ENCODE measurements at regions of chr18 and their contacts with region 1.

Region 1: DNA sequence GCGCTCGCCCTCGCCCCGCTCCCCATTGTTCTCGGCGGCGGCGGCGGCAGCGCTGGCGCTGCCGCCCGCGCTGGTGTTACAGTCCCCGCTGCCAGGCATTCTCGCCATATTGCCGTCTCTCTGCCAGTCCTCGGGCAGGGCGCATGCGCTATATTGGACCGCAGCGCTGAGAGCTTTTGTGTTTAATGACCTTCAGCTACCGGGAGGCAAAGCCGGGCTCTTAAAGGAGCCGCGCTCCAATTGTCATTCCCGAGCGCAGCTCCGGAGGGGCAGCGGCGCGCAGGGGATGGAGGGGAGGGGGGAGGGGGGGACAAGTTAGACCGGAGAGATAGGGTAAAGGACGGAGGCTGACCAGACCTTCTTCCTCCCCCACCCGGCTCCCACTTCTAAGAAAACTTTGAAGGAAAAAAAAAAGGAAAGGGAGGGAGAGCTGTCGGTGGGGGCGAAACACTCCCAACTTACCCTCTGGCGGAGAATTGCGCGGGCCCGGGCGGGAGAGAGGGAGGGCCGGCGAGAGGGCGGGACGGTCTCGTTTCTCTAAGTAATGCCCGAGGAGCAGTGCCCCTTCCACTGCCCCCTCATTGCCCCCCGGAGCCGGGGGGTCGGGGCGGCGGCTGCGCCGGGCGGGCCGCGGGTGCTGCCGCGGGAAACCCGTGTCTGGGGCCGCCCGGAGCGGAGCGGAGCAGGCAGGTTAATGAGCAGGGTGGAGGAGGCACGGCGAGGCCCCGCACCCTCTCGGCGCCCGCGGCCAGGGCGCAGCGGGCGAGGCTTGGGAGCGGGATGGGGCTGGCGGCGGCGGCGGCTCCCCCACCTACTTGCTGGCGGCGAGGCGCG is at the start of gene KCTD1:
- DNase-seq: peak; percentile 73
- H3K4me3 ChIP-seq: peak within 1 kb of the TSS; percentile 66 to 69
- H3K27ac ChIP-seq: peak within 1 kb of the TSS; percentile 79 to 82
- H3K4me1 ChIP-seq: no peaks in the 10 kb centered on the region
- H3K27me3 ChIP-seq: no peaks in the 10 kb centered on the region
- CTCF ChIP-seq: no peak
- POLR2A ChIP-seq: peak; percentile 27
- total RNA-seq, gene KCTD1: 24.7 to 40.5 TPM

Region 2: GRCh38 chr18:25827961-25828561 is 720.6 kb before region 1 on chr18:
- intact Hi-C with region 1: no loop called
- DNase-seq: no peak
- H3K4me3 ChIP-seq: no peak overlapping the region
- H3K27ac ChIP-seq: no peak overlapping the region
- H3K4me1 ChIP-seq: no peaks in the 10 kb centered on the region
- H3K27me3 ChIP-seq: no peaks in the 10 kb centered on the region
- CTCF ChIP-seq: no peak
- POLR2A ChIP-seq: no peak

Region 3: GRCh38 chr18:26226229-26227005 is 322.2 kb before region 1 on chr18 and contains the start of gene TAF4B:
- intact Hi-C with region 1: loop called (anchors 10 kb)
- DNase-seq: peak; percentile 93
- H3K4me3 ChIP-seq: peak within 1 kb of the TSS; percentile 77 to 82
- H3K27ac ChIP-seq: peak within 1 kb of the TSS; percentile 68 to 71
- H3K4me1 ChIP-seq: peaks cover 4% of the 10 kb centered on the region
- H3K27me3 ChIP-seq: no peaks in the 10 kb centered on the region
- CTCF ChIP-seq: no peak
- POLR2A ChIP-seq: peak; percentile 88
- total RNA-seq, gene TAF4B: 5.3 to 37.3 TPM

Region 4: GRCh38 chr18:26383454-26384270 is 165.0 kb before region 1 on chr18:
- intact Hi-C with region 1: loop called (anchors 10 kb)
- DNase-seq: no peak
- H3K4me3 ChIP-seq: no peak overlapping the region
- H3K27ac ChIP-seq: no peak overlapping the region
- H3K4me1 ChIP-seq: no peaks in the 10 kb centered on the region
- H3K27me3 ChIP-seq: no peaks in the 10 kb centered on the region
- CTCF ChIP-seq: peak; percentile 30 to 77 (median 58)
- POLR2A ChIP-seq: no peak

Region 5: GRCh38 chr18:26656944-26657536 is 108.4 kb after region 1 on chr18:
- intact Hi-C with region 1: loop called (anchors 5 kb)
- DNase-seq: peak; percentile 75
- H3K4me3 ChIP-seq: peak overlapping the region; percentile 71 to 78
- H3K27ac ChIP-seq: peak overlapping the region; percentile 96 to 97
- H3K4me1 ChIP-seq: no peaks in the 10 kb centered on the region
- H3K27me3 ChIP-seq: no peaks in the 10 kb centered on the region
- CTCF ChIP-seq: peak in 2 of 4 experiments; percentile 43 to 51
- POLR2A ChIP-seq: peak; percentile 64